ENCODE measurements at regions of chr16 and their contacts with region 1.

Region 1: DNA sequence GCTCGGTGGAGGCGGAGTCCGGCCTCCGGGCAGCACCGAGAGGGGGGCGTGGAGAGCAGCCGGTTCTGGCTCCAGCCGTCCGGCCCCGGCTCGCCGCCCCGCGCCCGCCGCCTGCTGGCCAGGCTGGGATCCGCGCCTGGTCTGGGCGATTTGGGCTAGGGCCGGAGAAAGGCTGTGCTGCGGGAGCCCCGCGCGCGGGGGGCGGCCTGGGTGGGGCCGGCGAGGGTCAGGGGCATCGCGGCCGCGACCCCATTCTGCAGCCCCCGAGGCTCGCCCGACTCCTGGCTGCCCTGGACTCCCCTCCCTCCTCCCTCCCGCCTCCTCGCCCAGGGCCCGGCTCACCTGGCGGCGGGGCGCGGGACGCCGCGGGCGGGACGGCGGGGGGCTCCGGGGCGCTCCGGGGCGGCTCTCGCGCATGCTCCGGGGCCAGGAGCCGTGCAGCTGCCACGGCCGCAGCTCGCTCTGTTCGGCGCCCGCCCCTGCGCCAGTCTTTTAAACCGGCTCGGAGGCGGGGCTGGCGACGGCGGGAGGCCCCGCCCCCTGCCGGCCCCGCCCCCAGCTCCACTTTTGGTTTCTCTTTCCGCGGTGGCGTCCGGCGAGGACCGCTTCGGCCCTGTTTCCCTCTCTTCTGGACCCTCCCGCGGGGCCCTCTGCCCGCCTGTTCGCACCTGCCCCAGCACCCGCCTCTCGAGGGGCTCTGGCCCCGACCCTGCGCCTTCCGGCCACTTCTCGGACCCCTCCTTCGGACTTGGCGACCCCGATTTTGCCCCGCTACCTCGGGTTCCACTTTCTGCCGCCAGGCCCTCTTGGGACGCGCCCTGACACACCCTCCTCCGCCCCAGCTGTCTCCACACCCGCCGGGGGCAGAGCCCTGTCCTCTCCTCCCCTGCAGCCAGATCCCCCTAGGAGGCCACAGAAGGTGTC is at the start of gene SOCS1:
- DNase-seq: peak; percentile 97
- H3K4me3 Mint-ChIP-seq: peak within 1 kb of the TSS; percentile 99
- H3K27ac Mint-ChIP-seq: peak within 1 kb of the TSS; percentile 97
- H3K4me1 Mint-ChIP-seq: peaks cover 50% of the 10 kb centered on the region
- H3K27me3 Mint-ChIP-seq: no peaks in the 10 kb centered on the region
- total RNA-seq, gene SOCS1: 152 and 153 TPM in 2 replicates

Region 2: DNA sequence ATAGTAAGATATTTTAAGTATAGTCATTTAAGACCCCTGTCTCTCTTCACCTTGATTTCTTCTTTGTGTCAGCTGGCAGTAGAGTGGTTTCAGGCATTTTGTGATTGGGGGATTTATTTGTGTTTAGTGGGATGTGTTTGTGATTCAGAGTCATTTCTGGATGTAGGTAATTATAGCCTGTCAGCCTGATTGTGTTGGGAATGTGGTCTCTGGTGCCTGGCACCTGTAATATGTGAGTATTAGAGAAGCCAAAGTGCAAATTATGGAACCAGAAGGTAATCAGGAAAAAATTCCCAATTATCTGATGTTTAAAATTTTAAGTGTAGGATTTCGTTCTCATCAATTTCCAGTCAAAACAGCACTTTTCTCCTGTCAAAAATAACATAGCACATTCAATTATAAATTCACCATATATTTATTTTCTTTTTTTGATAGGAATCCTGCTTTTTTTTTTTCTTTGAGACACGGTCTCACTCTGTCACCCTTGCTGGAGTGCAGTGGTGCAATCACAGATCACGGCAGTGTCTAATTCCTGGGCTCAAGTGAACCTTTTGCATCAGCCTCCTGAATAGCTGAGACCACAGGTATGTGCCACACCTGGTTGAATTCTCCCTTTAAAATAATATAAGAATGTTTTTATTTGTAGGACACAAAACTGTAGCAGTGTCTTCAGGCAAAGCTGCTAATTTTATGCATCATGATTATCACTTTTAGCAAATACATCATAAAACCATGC is 827.4 kb before region 1 on chr16:
- intact Hi-C with region 1: no loop called
- DNase-seq: no peak
- H3K4me3 Mint-ChIP-seq: no peak overlapping the region
- H3K27ac Mint-ChIP-seq: peak overlapping the region; percentile 8
- H3K4me1 Mint-ChIP-seq: no peaks in the 10 kb centered on the region
- H3K27me3 Mint-ChIP-seq: no peaks in the 10 kb centered on the region

Region 3: GRCh38 chr16:10971560-10971961 is 284.4 kb before region 1 on chr16:
- intact Hi-C with region 1: loop called (anchors 1 kb)
- DNase-seq: peak; percentile 83
- H3K4me3 Mint-ChIP-seq: peak overlapping the region; percentile 25
- H3K27ac Mint-ChIP-seq: peak overlapping the region; percentile 87
- H3K4me1 Mint-ChIP-seq: peaks cover 55% of the 10 kb centered on the region
- H3K27me3 Mint-ChIP-seq: no peaks in the 10 kb centered on the region

Region 4: DNA sequence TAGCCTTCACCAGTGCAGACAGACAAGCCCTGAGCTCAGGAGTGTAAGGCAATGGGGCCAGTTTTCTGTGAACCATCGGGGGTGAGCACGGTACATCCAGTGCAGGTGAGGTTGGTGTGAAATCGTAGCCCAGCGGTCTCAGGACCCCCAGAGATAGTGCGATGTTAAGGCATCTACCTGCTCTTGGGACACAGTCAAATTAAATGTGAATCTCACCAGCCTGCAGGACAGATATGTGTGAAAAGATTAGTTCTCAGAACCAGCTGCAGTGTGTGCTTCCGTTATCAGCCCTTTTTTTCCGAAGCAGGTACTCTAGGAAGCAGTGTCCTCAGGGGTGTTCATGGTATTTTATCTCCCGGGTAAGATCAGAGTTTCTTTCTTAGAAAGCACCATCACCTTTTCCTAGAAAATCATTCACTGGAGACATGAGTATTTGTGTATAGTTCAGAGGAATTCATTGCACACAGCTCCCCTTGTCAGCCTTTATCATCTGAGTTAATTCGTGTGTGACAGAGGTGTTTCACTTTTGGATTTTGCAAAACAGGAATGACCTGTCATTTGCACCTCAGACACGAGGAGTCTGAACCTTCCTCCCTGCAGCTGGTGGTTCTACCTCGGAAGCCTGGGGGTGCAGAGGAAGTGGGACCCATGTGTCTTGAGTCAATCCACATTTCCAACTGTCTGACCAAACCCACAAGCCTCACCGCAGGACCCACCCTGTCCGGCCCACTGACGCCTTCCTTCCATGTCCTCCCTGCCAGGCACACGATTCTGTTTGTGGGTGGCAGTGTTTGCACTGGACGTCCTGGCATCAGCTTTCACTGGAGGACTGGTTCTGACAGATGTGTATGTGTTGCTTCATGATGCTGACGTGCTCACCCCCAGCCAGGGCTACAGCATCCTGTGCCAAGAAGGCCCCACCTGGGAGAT is 203.9 kb before region 1 on chr16:
- intact Hi-C with region 1: loop called (anchors 1 kb)
- DNase-seq: peak; percentile 93
- H3K4me3 Mint-ChIP-seq: peak overlapping the region; percentile 46
- H3K27ac Mint-ChIP-seq: peak overlapping the region; percentile 89
- H3K4me1 Mint-ChIP-seq: peaks cover 77% of the 10 kb centered on the region
- H3K27me3 Mint-ChIP-seq: no peaks in the 10 kb centered on the region

Region 5: DNA sequence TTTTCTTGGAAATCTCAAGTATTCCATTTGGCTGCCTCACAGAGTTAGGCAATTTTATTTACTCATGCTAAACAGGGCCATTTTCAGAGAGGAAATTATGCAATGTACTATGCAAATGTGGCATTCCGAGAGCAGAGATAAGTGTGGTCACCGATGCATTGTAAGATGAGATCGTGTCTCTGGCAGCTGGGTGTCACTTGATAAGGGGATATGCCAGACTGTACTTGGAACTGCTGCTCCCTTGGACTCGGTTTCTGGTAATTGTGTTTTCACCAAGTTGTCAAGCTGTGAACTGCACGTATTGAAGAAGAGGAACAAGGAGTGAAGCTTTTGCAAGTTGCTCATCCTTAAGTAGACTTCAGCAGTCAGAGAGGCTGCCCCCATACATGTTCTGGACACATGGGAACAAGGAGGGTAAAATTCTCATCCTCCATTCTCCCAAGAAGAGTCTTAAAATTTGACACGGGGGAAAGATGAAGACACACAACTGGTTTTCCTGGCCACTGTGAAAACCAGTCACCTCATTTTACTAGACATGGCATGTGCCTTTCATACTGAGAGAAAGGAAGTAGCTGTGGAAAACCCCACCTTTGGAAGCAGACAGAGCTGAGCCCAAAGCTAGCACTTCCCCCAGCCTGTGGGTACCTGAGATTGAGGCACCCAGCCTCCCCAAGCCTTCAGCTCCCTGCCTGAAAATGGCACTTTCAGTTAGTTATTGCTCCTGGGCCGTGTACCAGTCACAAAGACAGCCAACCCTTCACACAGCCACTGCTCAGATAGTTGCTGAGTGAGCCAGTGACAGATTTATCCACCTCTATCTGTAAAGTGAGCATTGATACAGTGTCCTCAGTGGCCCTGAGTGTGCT is 150.7 kb before region 1 on chr16:
- intact Hi-C with region 1: loop called (anchors 1 kb)
- DNase-seq: peak; percentile 84
- H3K4me3 Mint-ChIP-seq: peak overlapping the region; percentile 73
- H3K27ac Mint-ChIP-seq: peak overlapping the region; percentile 92
- H3K4me1 Mint-ChIP-seq: peaks cover 65% of the 10 kb centered on the region
- H3K27me3 Mint-ChIP-seq: no peaks in the 10 kb centered on the region

Region 6: DNA sequence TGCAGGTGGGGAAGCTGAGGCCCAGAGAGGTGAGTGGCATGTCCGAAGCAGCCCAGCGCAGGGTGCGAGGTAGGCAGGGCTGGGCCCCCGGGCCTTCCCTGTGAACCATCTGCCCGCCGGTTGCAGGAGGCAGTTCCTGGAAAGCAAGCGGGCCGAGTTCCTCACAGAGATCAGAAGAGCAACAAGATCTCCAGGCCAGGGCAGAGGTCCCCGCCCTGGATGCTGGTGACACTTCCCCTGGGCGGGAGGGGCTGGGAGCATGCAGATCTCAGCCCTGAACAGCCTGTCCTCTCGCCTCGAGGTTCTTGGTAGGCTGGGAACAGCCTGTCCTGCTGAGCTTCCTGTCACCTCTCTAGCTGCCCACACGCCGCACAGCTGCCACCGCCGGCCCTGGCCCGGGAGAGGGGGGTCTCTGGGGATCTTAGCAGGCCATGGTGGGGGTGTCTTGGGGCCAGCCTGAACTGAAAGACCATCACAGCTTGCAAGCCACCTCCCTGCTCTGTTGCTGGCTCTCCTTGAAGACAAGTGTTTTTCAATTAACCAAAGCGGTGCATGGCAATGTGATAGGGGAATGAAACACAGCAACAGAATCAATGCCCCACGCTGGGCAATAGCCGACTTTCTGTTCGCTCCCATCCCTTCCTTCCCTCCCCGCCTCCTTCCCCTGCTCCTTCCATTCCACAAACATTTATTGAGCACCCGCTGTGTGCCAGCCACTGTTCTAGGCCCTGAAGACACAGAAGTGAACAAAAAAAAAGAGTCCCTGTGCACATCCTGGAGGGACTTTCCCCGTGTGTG is 31.7 kb before region 1 on chr16:
- intact Hi-C with region 1: loop called (anchors 1 kb)
- DNase-seq: peak; percentile 92
- H3K4me3 Mint-ChIP-seq: peak overlapping the region; percentile 86
- H3K27ac Mint-ChIP-seq: peak overlapping the region; percentile 100
- H3K4me1 Mint-ChIP-seq: peaks cover 56% of the 10 kb centered on the region
- H3K27me3 Mint-ChIP-seq: no peaks in the 10 kb centered on the region

Region 7: DNA sequence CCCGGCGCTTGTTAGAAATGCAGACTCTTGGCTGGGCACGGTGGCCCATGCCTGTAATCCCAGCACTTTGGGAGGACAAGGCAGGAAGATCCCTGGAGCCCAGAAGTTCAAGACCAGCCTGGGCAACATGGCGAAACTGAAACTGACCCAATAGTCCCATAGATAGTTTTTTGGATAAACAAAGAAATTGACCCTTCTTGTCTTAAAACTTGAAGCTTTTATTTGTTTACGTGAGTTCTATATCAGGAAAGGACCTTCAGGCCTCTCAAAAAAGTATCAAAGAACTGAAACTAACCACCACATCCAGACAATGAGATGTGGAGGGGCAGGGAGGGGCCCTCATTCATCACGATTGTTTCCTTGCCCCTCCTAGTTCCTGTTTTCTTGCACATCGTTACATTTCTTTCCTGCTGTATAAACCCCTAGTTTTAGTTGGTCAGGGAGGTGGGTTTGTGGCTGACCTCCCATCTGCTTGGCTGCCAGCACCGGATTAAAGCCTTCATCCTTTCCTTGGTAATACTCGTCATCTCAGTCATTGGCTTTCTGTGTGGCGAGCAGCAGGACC is 55.1 kb after region 1 on chr16:
- intact Hi-C with region 1: no loop called
- DNase-seq: peak; percentile 91
- H3K4me3 Mint-ChIP-seq: peak overlapping the region; percentile 58
- H3K27ac Mint-ChIP-seq: peak overlapping the region; percentile 85
- H3K4me1 Mint-ChIP-seq: peaks cover 57% of the 10 kb centered on the region
- H3K27me3 Mint-ChIP-seq: no peaks in the 10 kb centered on the region

Region 8: GRCh38 chr16:11328172-11329070 is 72.4 kb after region 1 on chr16:
- intact Hi-C with region 1: loop called (anchors 2 kb)
- DNase-seq: peak; percentile 88
- H3K4me3 Mint-ChIP-seq: peak overlapping the region; percentile 70
- H3K27ac Mint-ChIP-seq: peak overlapping the region; percentile 77
- H3K4me1 Mint-ChIP-seq: peaks cover 55% of the 10 kb centered on the region
- H3K27me3 Mint-ChIP-seq: no peaks in the 10 kb centered on the region

Region 9: GRCh38 chr16:11586856-11587642 is 331.1 kb after region 1 on chr16 and contains the start of gene LITAF:
- intact Hi-C with region 1: loop called (anchors 10 kb)
- DNase-seq: peak; percentile 87
- H3K4me3 Mint-ChIP-seq: peak within 1 kb of the TSS; percentile 90
- H3K27ac Mint-ChIP-seq: peak within 1 kb of the TSS; percentile 89
- H3K4me1 Mint-ChIP-seq: peaks cover 38% of the 10 kb centered on the region
- H3K27me3 Mint-ChIP-seq: peaks cover 3% of the 10 kb centered on the region
- total RNA-seq, gene LITAF: 163 and 170 TPM in 2 replicates

Region 10: DNA sequence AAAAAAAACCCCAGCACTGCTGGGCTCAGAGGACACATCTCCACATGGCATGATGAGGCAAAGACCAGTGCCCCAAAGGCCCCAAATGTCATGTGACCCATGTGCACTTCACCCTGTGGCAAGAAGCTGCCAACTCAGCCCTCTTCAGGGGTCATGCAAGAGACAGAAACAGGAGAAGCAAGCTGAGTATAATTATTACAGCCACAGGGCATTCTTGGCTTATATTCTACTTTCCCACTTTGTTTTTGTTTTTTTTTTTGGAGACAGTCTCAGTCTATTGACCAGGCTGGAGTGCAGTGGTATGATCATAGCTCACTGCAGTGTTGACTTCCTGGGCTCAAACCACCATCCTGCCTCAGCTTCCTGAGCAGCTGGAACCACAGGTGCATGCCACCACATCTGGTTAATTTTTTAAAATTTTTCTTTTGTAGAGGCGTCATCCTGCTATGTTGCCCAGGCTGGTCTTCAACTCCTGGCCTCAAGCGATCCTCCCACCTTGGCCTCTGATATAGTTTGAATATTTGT is 363.4 kb after region 1 on chr16:
- intact Hi-C with region 1: no loop called
- DNase-seq: peak; percentile 80
- H3K4me3 Mint-ChIP-seq: peak overlapping the region; percentile 45
- H3K27ac Mint-ChIP-seq: peak overlapping the region; percentile 91
- H3K4me1 Mint-ChIP-seq: peaks cover 31% of the 10 kb centered on the region
- H3K27me3 Mint-ChIP-seq: no peaks in the 10 kb centered on the region

Measured in activated CD4-positive, alpha-beta T cell treated with anti-CD3 and anti-CD28 coated beads, Interleukin-2, amount 10 ng/mL, durations not matched to agents 24 days and 14 days (primary cell).